WTC11 (cell line): ENCODE measurements at regions of chr17 and their contacts with region 1.

Region 1: GRCh38 chr17:38351412-38352222 is at the start of gene SOCS7:
- DNase-seq: peak; percentile 90
- ATAC-seq: peak; percentile 81
- H3K4me3 Mint-ChIP-seq: peak within 1 kb of the TSS; percentile 79
- H3K27ac Mint-ChIP-seq: peak within 1 kb of the TSS; percentile 98
- H3K4me1 Mint-ChIP-seq: peaks cover 48% of the 10 kb centered on the region
- H3K27me3 Mint-ChIP-seq: no peaks in the 10 kb centered on the region; the same call in 1 of the 2 replicates
- CTCF ChIP-seq: no peak
- total RNA-seq, gene SOCS7: 32.3 to 34.4 TPM (median 33.6 TPM) in 3 replicates

Region 2: GRCh38 chr17:38341035-38341721 is 10.4 kb before region 1 on chr17:
- CTCF ChIA-PET with region 1: interaction called, 221 read pairs
- POLR2A ChIA-PET with region 1: no interaction called
- DNase-seq: peak; percentile 40
- ATAC-seq: peak; percentile 85
- H3K4me3 Mint-ChIP-seq: no peak overlapping the region
- H3K27ac Mint-ChIP-seq: no peak overlapping the region
- H3K4me1 Mint-ChIP-seq: peaks cover 16% of the 10 kb centered on the region
- H3K27me3 Mint-ChIP-seq: no peaks in the 10 kb centered on the region; the same call in 1 of the 2 replicates
- CTCF ChIP-seq: no peak

Region 3: GRCh38 chr17:38403491-38403890 is 51.9 kb after region 1 on chr17:
- CTCF ChIA-PET with region 1: interaction called, 41 read pairs
- POLR2A ChIA-PET with region 1: interaction called, 3 read pairs
- DNase-seq: no peak
- ATAC-seq: peak; percentile 62
- H3K4me3 Mint-ChIP-seq: peak overlapping the region; percentile 45
- H3K27ac Mint-ChIP-seq: peak overlapping the region; percentile 70; the same call in 1 of the 2 replicates
- H3K4me1 Mint-ChIP-seq: peaks cover 37% of the 10 kb centered on the region
- H3K27me3 Mint-ChIP-seq: no peaks in the 10 kb centered on the region
- CTCF ChIP-seq: no peak

Region 4: DNA sequence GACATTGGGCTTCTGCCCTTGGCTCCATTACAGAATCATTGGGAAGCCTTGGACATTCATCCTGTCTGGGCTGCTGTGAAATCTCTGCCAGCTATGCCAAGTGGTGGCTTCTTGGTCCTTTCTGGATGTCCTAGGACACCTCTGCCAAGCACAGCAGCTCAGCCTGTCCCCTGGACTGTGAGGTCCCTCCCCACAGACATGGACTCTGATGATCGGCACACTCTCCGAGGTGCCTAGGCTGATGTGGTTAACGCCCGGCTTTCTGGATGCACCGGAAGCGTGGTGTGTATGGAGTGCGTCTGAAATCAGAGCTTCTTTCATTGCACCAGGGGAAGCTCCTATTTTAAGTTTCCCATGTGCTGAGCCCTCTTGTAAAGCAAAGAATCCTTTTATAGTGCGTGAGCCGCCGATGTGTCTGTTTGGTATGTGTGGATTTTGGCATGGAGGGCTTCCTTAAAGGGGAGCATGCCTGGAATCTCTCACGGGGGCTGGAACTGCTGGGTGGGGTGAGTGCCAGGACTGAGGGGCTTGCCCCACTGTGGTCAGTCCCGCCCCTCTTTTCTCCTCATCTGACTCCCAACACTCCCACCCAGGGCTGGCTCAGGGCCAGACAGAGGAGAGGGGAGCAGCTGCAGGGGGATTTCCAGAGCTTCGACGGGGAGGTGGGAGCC is 69.7 kb after region 1 on chr17:
- CTCF ChIA-PET with region 1: interaction called, 222 read pairs
- POLR2A ChIA-PET with region 1: no interaction called
- DNase-seq: no peak
- ATAC-seq: no peak; the same call in 1 of the 2 replicates
- H3K4me3 Mint-ChIP-seq: peak overlapping the region; percentile 22
- H3K27ac Mint-ChIP-seq: no peak overlapping the region
- H3K4me1 Mint-ChIP-seq: peaks cover 70% of the 10 kb centered on the region
- H3K27me3 Mint-ChIP-seq: peaks cover 38% of the 10 kb centered on the region
- CTCF ChIP-seq: no peak

Region 5: DNA sequence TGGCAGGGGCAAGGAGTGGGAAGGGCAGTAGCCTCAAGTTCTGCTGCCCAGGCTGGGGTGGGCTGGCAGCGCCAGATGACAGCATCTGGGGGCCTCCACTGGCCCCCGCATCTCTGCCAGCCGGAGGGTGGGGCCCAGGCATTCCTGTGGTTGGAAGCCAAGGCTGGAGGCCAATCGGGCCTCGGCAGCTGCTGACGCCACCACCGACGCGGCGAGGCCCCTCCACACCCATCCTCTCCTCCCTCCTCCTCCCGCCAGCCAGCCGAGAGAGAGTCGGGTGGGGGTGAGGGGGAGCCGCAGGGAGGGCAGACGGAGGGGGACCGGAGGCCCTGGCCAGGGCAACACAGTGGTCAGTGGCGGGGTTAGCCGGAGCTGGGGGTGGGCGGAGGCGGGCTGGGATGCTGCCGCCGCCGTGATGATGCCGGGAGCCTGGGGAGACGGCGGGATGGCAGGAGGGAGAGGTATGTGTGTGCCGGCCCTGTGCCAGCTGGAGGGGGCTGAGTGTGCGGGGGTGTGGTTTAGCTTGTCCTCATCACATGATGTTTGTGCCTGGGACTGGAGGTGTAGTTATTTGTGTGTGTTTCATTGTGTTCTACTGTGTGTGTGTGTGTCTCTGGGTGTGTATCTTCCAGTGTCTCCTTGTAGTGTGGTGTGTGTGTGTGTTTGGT is 113.2 kb after region 1 on chr17:
- CTCF ChIA-PET with region 1: no interaction called
- POLR2A ChIA-PET with region 1: no interaction called
- DNase-seq: no peak
- ATAC-seq: peak; percentile 34
- H3K4me3 Mint-ChIP-seq: no peak overlapping the region
- H3K27ac Mint-ChIP-seq: peak overlapping the region; percentile 87; the same call in 1 of the 2 replicates
- H3K4me1 Mint-ChIP-seq: peaks cover 12% of the 10 kb centered on the region
- H3K27me3 Mint-ChIP-seq: no peaks in the 10 kb centered on the region
- CTCF ChIP-seq: no peak